ENCODE measurements at regions of chr6 and their contacts with region 1.

Region 1: DNA sequence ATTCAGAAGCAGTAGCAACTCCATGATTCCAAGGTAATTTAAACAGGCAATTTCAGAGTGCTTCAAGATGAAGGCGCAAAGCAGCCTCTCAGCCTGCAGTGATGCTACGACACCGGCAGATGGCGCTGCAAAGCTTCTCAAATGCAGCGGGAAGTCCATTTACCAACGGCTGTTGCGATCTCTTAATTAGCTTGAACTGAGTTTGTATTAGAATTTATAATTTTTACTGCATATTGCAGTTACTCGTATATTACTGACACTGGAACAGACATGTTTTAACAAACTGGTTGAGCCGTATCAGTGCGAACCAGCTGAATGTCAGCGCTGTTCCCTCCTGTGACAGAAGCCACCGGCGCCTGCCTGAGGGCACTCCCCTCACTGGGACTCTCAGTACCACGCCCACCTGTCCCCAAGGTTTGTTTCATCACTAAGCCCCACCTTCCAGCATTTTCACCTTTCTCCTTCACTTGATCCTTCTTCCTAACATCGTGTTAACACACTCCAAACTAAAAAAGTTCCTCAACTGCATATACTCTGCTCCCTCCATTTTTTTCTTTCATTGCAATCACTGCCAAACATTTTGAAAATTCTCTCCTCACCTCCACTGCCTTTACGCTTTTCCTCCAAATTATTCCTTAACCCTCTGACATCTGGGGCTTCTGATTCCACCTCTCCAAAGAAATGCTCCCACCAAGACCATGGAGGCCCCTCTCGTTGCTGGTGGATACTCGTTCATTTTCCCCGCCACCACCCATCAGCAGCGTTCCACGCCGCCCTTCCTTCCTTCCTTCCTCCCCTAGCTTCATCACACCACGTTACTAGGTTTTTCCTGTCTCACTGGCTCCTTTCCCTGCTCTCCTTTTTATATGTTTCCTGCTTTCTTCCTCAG is 14.5 kb downstream of the GNL1 start:
- DNase-seq: peak; percentile 69 to 86 (median 77)
- ATAC-seq: peak; percentile 63 to 82 (median 72)
- H3K4me3 ChIP-seq: peak overlapping the region in 11 of 12 donors; percentile 22 to 54 (median 44)
- H3K27ac ChIP-seq: peak overlapping the region; percentile 1 to 80 (median 63)
- H3K4me1 ChIP-seq: peaks cover 0 to 32% (median 9%) of the 10 kb centered on the region in 12 donors
- H3K27me3 ChIP-seq: no peaks in the 10 kb centered on the region
- CTCF ChIP-seq: peak; percentile 94 to 100 (median 99)
- POLR2A ChIP-seq: no peak

Region 2: DNA sequence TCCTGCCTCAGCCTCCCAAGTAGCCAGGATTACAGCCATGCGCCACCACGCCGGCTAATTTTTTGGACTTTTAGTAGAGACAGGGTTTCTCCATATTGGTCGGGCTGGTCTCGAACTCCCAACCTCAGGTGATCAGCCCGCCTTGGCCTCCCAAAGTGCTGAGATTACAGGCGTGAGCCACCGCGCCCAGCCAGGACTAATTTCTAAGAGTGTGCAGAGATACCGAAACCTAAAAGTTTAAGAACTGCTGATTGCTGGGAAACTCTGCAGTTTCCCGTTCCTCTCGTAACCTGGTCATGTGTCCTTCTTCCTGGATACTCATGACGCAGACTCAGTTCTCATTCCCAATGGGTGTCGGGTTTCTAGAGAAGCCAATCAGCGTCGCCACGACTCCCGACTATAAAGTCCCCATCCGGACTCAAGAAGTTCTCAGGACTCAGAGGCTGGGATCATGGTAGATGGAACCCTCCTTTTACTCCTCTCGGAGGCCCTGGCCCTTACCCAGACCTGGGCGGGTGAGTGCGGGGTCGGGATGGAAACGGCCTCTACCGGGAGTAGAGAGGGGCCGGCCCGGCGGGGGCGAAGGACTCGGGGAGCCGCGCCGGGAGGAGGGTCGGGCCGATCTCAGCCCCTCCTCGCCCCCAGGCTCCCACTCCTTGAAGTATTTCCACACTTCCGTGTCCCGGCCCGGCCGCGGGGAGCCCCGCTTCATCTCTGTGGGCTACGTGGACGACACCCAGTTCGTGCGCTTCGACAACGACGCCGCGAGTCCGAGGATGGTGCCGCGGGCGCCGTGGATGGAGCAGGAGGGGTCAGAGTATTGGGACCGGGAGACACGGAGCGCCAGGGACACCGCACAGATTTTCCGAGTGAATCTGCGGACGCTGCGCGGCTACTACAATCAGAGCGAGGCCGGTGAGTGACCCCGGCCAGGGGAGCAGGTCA is 52.4 kb before region 1 on chr6 and contains the start of gene HLA-E:
- intact Hi-C with region 1: loop called in 7 of 10 experiments (anchors 1 to 5 kb)
- DNase-seq: peak; percentile 91 to 95 (median 93)
- ATAC-seq: peak; percentile 93 to 98 (median 96)
- H3K4me3 ChIP-seq: peak within 1 kb of the TSS; percentile 64 to 99 (median 94)
- H3K27ac ChIP-seq: peak within 1 kb of the TSS; percentile 92 to 100 (median 96)
- H3K4me1 ChIP-seq: peaks cover 0 to 45% (median 19%) of the 10 kb centered on the region in 12 donors
- H3K27me3 ChIP-seq: no peaks in the 10 kb centered on the region
- CTCF ChIP-seq: no peak
- POLR2A ChIP-seq: peak; percentile 71 to 99
- total RNA-seq, gene HLA-E: 96.1 to 560 (median 162) TPM

Region 3: GRCh38 chr6:30590994-30591393 is 49.2 kb after region 1 on chr6:
- intact Hi-C with region 1: loop called in 6 of 10 experiments (anchors 2 to 10 kb)
- DNase-seq: no peak
- ATAC-seq: peak in 1 of 4 donors; percentile 25
- H3K4me3 ChIP-seq: no peak overlapping the region
- H3K27ac ChIP-seq: peak overlapping the region in 2 of 12 donors; percentile 25 to 36
- H3K4me1 ChIP-seq: no peaks in the 10 kb centered on the region
- H3K27me3 ChIP-seq: no peaks in the 10 kb centered on the region
- CTCF ChIP-seq: no peak
- POLR2A ChIP-seq: no peak

Region 4: GRCh38 chr6:30600451-30600961 is 58.7 kb after region 1 on chr6:
- intact Hi-C with region 1: loop called in 7 of 10 experiments (anchors 2 to 10 kb)
- DNase-seq: peak in 2 of 5 donors; percentile 33 to 54
- ATAC-seq: peak in 3 of 4 donors; percentile 3 to 5 (median 4)
- H3K4me3 ChIP-seq: no peak overlapping the region
- H3K27ac ChIP-seq: no peak overlapping the region
- H3K4me1 ChIP-seq: peaks cover 0 to 11% (median 0%) of the 10 kb centered on the region in 12 donors
- H3K27me3 ChIP-seq: no peaks in the 10 kb centered on the region
- CTCF ChIP-seq: no peak
- POLR2A ChIP-seq: no peak